Naive thymus-derived CD4-positive, alpha-beta T cell (primary cell): ENCODE measurements at regions of chr17 and their contacts with region 1.

Region 1: GRCh38 chr17:42760652-42761581 is at the start of gene RAMP2:
- DNase-seq: peak in 1 of 9 donors; percentile 38
- ATAC-seq: peak; percentile 39
- H3K4me3 ChIP-seq: no peak within 1 kb of the TSS
- H3K4me3 Mint-ChIP-seq: peak within 1 kb of the TSS; percentile 21 to 73 (median 56)
- H3K27ac ChIP-seq: no peak within 1 kb of the TSS
- H3K27ac Mint-ChIP-seq: peak within 1 kb of the TSS in 1 of 9 donors; percentile 43
- H3K4me1 ChIP-seq: peaks cover 0 to 10% of the 10 kb centered on the region in 2 donors
- H3K4me1 Mint-ChIP-seq: peaks cover 0 to 13% (median 7%) of the 10 kb centered on the region in 7 donors
- H3K27me3 ChIP-seq: peaks cover 3 to 12% of the 10 kb centered on the region in 2 donors
- H3K27me3 Mint-ChIP-seq: peaks cover 59 to 69% (median 64%) of the 10 kb centered on the region in 5 donors
- total RNA-seq, gene RAMP2: not detected

Region 2: GRCh38 chr17:42403150-42403549 is 357.8 kb before region 1 on chr17:
- CTCF ChIA-PET with region 1: no interaction called
- POLR2A ChIA-PET with region 1: no interaction called
- intact Hi-C with region 1: no loop called
- DNase-seq: peak in 1 of 9 donors; percentile 63
- ATAC-seq: no peak
- H3K4me3 ChIP-seq: no peak overlapping the region
- H3K4me3 Mint-ChIP-seq: no peak overlapping the region
- H3K27ac ChIP-seq: no peak overlapping the region
- H3K27ac Mint-ChIP-seq: peak overlapping the region in 2 of 9 donors; percentile 13 to 17
- H3K4me1 ChIP-seq: peaks cover 4 to 19% of the 10 kb centered on the region in 2 donors
- H3K4me1 Mint-ChIP-seq: peaks cover 19 to 46% (median 26%) of the 10 kb centered on the region in 7 donors
- H3K27me3 ChIP-seq: no peaks in the 10 kb centered on the region
- H3K27me3 Mint-ChIP-seq: peaks cover 0 to 3% (median 0%) of the 10 kb centered on the region in 5 donors

Region 3: GRCh38 chr17:42720996-42721583 is 39.8 kb before region 1 on chr17:
- CTCF ChIA-PET with region 1: interaction called, 8 read pairs
- POLR2A ChIA-PET with region 1: no interaction called
- intact Hi-C with region 1: loop called (anchors 1 kb)
- DNase-seq: peak in 7 of 9 donors; percentile 43 to 74 (median 62)
- ATAC-seq: peak; percentile 87
- H3K4me3 ChIP-seq: no peak overlapping the region
- H3K4me3 Mint-ChIP-seq: no peak overlapping the region
- H3K27ac ChIP-seq: no peak overlapping the region
- H3K27ac Mint-ChIP-seq: no peak overlapping the region
- H3K4me1 ChIP-seq: no peaks in the 10 kb centered on the region
- H3K4me1 Mint-ChIP-seq: peaks cover 0 to 5% (median 4%) of the 10 kb centered on the region in 7 donors
- H3K27me3 ChIP-seq: no peaks in the 10 kb centered on the region
- H3K27me3 Mint-ChIP-seq: no peaks in the 10 kb centered on the region

Region 4: DNA sequence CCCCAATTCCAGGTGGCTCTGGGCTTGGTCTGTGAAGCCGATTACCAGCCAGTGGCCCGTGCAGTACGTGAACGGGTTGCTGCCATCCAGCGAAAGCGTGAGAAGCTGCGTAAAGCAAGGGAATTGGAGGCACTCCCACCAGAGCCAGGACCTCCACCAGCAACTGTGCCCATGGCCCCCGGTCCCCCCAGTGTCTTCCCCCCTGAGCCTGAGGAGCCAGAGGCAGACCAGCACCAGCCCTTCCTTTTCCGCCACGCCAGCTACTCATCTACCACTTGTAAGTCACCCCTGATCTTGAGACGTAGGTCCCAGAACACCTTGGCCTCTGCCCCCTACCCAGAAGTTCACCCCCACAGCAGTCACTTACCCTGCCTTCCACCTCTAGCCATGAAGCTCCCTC is 26.3 kb after region 1 on chr17:
- CTCF ChIA-PET with region 1: no interaction called
- POLR2A ChIA-PET with region 1: no interaction called
- intact Hi-C with region 1: no loop called
- DNase-seq: no peak
- ATAC-seq: no peak
- H3K4me3 ChIP-seq: no peak overlapping the region
- H3K4me3 Mint-ChIP-seq: peak overlapping the region in 1 of 10 donors; percentile 79
- H3K27ac ChIP-seq: no peak overlapping the region
- H3K27ac Mint-ChIP-seq: no peak overlapping the region
- H3K4me1 ChIP-seq: peaks cover 6 to 16% of the 10 kb centered on the region in 2 donors
- H3K4me1 Mint-ChIP-seq: peaks cover 7 to 28% (median 24%) of the 10 kb centered on the region in 7 donors
- H3K27me3 ChIP-seq: peaks cover 0 to 19% of the 10 kb centered on the region in 2 donors
- H3K27me3 Mint-ChIP-seq: peaks cover 51 to 72% (median 62%) of the 10 kb centered on the region in 5 donors